ENCODE measurements at regions of chr3 and their contacts with region 1.

Region 1: DNA sequence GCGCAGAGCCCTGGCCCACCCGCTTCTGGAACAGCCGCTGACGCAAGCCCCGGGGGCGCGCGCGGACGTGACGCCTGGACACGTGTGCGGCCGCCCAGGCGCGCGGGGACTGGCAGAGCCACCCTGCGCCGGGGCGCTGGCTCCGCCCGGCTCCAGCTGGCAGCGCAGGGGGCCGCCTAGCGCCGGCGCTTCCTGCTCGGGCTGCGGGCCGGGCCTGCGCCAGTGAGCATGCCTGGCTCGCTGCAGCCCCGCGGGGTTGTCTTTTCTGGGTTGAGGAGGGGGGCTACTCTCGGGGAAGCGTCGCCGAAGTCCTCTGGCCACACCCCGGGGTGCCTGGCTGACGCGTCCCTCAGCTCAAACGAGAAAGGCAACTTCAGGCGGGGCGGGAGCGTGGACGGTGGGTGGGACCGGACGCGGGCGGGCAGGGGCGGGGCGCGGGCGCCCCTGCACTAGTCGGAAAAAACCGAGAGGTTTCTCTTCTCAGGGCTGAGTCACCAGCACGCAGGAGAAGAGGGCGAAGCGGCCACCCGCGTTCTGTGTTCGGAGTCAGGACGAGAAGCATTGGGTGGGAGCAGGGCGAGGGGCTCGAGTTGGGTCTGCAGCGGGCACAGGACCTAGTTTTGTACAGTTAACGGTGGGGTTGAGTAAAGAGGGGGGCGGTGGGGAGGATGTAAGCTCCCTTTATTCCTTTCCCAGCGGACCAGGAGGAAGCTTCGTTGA is at the start of gene SIAH2:
- DNase-seq: peak; percentile 94
- H3K4me3 ChIP-seq: peak within 1 kb of the TSS; percentile 43 to 85 (median 64)
- H3K27ac ChIP-seq: peak within 1 kb of the TSS; percentile 86
- H3K4me1 ChIP-seq: peaks cover 19% of the 10 kb centered on the region
- H3K27me3 ChIP-seq: no peaks in the 10 kb centered on the region
- CTCF ChIP-seq: no peak
- POLR2A ChIP-seq: peak; percentile 92
- total RNA-seq, gene SIAH2: 16.0 and 16.7 TPM in 2 replicates

Region 2: GRCh38 chr3:150546226-150547044 is 216.8 kb before region 1 on chr3 and contains the starts of genes EIF2A and SERP1:
- CTCF ChIA-PET with region 1: no interaction called
- POLR2A ChIA-PET with region 1: interaction called, 7 read pairs
- dilution Hi-C with region 1: no loop called
- intact Hi-C with region 1: loop called (anchors 1 kb)
- DNase-seq: peak; percentile 100
- H3K4me3 ChIP-seq: peak within 1 kb of the TSS; percentile 80 to 98 (median 93)
- H3K27ac ChIP-seq: peak within 1 kb of the TSS; percentile 97
- H3K4me1 ChIP-seq: peaks cover 25% of the 10 kb centered on the region
- H3K27me3 ChIP-seq: no peaks in the 10 kb centered on the region
- CTCF ChIP-seq: no peak
- POLR2A ChIP-seq: peak; percentile 85
- total RNA-seq, gene EIF2A: 97.6 and 104 TPM in 2 replicates
- total RNA-seq, gene SERP1: 81.7 and 82.0 TPM in 2 replicates

Region 3: DNA sequence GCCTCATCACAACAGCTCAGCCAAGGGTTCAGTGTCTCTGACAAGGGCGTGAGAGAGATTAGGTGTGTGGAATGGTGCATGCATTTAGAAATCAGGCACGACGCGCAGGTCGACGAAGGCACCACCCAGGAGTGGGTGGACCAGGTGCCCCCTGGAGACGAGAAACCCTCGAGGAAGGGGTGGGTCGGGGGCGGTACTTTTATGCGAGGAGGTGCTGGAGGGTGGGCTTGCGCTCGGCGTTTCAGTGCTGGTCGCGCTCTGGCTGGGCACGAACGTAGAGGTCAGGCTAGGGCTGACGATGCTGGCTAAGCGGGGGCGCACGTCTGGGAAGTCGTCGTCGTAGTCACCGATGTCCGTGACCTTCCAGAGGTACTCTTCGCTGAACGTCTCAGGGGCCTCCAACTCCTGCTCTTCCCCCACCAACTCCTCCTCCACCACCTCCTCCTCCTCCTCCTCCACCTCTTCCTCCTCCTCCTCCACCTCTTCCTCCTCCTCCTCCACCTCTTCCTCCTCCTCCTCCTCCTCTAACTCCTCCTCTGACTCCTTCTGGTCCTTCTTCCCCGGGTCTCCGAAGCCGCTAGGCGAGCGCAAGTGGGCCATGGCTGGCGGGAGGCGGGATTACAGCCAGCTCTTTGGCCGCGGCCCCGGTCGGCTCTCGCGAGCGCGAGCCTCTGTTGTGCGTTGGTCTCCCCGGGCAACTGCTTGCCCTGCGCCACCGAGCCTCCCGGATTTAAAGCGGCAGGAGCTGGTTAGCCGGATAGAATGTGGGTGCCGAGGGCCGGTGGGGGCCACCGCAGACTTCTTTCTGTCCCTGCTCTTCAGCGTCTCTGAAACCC is 59.8 kb before region 1 on chr3 and contains the start of gene ERICH6:
- CTCF ChIA-PET with region 1: interaction called, 5 read pairs
- POLR2A ChIA-PET with region 1: interaction called, 9 read pairs
- dilution Hi-C with region 1: no loop called
- intact Hi-C with region 1: loop called (anchors 1 kb)
- DNase-seq: peak; percentile 90
- H3K4me3 ChIP-seq: peak within 1 kb of the TSS; percentile 43 to 78 (median 68)
- H3K27ac ChIP-seq: peak within 1 kb of the TSS; percentile 72
- H3K4me1 ChIP-seq: peaks cover 7% of the 10 kb centered on the region
- H3K27me3 ChIP-seq: no peaks in the 10 kb centered on the region
- CTCF ChIP-seq: peak in 1 of 2 donors; percentile 12
- POLR2A ChIP-seq: peak; percentile 58
- total RNA-seq, gene ERICH6: not detected in 2 replicates

Region 4: DNA sequence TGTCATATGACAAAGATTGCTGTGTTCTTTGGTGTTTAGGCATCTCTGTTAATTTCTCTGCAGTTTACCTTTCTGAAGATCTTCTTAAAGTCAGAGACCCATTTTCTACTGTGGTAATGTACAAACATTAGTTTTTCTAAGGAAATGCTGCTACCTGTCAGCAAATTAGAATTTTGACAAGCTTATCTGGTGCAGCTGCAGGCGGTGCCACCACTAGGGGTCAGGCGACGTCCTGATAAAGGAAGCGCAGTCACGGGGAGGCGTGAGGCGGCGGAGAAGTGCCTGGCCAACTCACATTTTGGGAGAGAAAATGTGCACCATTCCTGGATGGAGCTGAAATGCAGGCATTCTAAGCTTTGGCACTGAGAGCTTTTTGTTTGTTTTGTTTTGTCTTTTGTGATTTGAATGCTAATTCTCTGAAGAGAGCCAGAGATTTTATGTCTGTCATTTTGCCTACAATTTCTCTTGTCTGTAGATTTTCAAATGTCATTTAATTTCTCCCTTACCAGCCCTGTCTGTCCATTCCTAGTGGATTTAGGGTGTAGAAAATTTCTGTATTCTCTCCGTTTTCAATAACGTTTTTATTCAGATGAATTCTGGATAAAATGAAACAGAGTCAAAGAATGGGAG is 24.6 kb after region 1 on chr3:
- CTCF ChIA-PET with region 1: interaction called, 33 read pairs
- POLR2A ChIA-PET with region 1: no interaction called
- dilution Hi-C with region 1: no loop called
- intact Hi-C with region 1: no loop called
- DNase-seq: peak; percentile 60
- H3K4me3 ChIP-seq: no peak overlapping the region
- H3K27ac ChIP-seq: no peak overlapping the region
- H3K4me1 ChIP-seq: peaks cover 5% of the 10 kb centered on the region
- H3K27me3 ChIP-seq: peaks cover 16 to 24% of the 10 kb centered on the region in 2 experiments
- CTCF ChIP-seq: peak; percentile 86 to 93
- POLR2A ChIP-seq: no peak

Measured in endothelial cell of umbilical vein (primary cell).